CD4-positive, alpha-beta memory T cell (primary cell): ENCODE measurements at regions of chr3 and their contacts with region 1.

Region 1: DNA sequence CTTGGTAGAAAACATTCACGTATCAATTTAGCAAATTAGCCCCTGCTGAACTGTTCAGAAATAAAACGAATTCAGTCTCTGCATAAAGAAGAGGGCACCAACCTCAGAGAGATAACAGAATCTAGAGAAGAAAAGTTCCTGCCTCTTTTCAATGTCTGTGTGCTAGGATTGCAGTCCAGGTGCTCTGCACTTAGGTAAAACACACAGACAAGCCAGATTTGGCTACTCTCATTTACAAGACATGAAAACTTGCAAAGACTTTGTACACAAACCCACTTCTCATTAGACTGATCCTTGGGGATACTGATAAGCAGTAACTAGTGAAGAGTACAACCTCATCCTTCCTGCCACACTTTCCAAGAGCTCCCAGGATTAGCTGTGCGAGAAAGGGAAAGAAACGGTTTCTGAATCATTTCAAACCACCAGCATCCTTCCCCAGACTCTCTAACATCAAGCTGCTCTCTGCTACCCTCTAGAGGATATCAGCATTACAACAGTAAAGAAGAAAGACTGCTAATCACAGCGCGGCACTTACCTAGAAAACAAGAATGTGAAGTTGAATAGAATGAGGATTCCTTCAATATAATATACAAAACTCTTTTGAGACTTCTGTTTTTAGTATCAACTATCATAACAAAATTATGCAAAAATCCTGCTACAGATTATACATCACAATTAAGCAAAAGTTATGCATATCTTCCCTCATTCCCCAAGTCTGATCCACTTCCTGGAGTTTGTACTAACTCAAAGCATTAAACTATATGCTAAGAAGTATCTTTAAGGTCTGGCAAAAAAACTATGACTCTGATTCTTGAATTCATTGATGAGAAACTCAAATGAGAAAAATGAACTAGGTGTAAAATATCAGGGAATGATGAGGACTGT is 306.4 kb downstream of the MAGI1 start:
- DNase-seq: peak in 3 of 5 donors; percentile 16 to 23 (median 17)
- H3K4me3 ChIP-seq: no peak overlapping the region
- H3K4me3 Mint-ChIP-seq: peak overlapping the region in 1 of 8 donors; percentile 48
- H3K27ac ChIP-seq: no peak overlapping the region
- H3K27ac Mint-ChIP-seq: no peak overlapping the region
- H3K4me1 ChIP-seq: no peaks in the 10 kb centered on the region
- H3K4me1 Mint-ChIP-seq: peaks cover 0 to 6% (median 4%) of the 10 kb centered on the region in 4 donors
- H3K27me3 ChIP-seq: no peaks in the 10 kb centered on the region
- H3K27me3 Mint-ChIP-seq: no peaks in the 10 kb centered on the region

Region 2: DNA sequence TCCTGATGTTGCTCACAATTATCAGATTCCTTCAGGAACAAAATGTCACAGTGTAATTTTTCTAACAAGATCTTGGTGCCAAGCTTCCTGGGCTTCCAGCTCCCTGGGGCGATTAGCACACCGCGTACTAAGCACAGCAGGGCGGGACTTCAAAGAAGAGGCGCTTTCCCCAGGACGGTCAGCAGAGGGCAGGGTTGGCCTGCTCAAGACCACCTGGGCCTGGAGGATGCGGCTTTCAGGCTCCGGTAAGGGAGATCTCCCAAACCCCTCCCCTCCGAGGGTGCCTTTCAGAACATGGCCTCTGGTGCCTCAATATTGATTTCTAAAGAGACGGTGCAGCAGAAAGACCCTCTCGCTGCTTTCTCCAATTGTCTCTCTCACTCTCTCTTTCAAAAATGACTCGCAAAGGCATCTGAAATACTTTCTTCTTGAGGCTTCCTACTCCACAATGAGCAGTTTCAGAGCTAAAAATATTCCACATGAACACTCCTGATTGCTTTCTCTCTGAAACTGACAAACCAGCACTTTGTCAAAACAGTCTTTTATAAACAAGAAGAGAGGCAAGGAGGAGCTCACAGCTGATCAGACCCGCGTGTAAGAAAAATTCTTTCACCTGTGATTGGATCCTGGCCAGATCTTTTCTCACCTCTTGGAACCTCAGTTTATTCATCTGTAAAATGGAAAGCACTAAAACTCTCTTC is 1198.5 kb before region 1 on chr3:
- CTCF ChIA-PET with region 1: no interaction called
- POLR2A ChIA-PET with region 1: no interaction called
- intact Hi-C with region 1: loop called (anchors 5 kb)
- DNase-seq: peak in 3 of 5 donors; percentile 2 to 8 (median 5)
- H3K4me3 ChIP-seq: no peak overlapping the region
- H3K4me3 Mint-ChIP-seq: peak overlapping the region in 1 of 8 donors; percentile 15
- H3K27ac ChIP-seq: no peak overlapping the region
- H3K27ac Mint-ChIP-seq: no peak overlapping the region
- H3K4me1 ChIP-seq: peaks cover 6% of the 10 kb centered on the region
- H3K4me1 Mint-ChIP-seq: peaks cover 0 to 5% (median 2%) of the 10 kb centered on the region in 4 donors
- H3K27me3 ChIP-seq: no peaks in the 10 kb centered on the region
- H3K27me3 Mint-ChIP-seq: peaks cover 7% of the 10 kb centered on the region in 2 donors

Region 3: GRCh38 chr3:66073464-66074141 is 341.3 kb after region 1 on chr3:
- CTCF ChIA-PET with region 1: no interaction called
- POLR2A ChIA-PET with region 1: no interaction called
- intact Hi-C with region 1: no loop called
- DNase-seq: no peak
- H3K4me3 ChIP-seq: no peak overlapping the region
- H3K4me3 Mint-ChIP-seq: no peak overlapping the region
- H3K27ac ChIP-seq: no peak overlapping the region
- H3K27ac Mint-ChIP-seq: no peak overlapping the region
- H3K4me1 ChIP-seq: no peaks in the 10 kb centered on the region
- H3K4me1 Mint-ChIP-seq: no peaks in the 10 kb centered on the region
- H3K27me3 ChIP-seq: no peaks in the 10 kb centered on the region
- H3K27me3 Mint-ChIP-seq: peaks cover 0 to 2% of the 10 kb centered on the region in 2 donors